ENCODE measurements at regions of chr7 and their contacts with region 1.

Region 1: DNA sequence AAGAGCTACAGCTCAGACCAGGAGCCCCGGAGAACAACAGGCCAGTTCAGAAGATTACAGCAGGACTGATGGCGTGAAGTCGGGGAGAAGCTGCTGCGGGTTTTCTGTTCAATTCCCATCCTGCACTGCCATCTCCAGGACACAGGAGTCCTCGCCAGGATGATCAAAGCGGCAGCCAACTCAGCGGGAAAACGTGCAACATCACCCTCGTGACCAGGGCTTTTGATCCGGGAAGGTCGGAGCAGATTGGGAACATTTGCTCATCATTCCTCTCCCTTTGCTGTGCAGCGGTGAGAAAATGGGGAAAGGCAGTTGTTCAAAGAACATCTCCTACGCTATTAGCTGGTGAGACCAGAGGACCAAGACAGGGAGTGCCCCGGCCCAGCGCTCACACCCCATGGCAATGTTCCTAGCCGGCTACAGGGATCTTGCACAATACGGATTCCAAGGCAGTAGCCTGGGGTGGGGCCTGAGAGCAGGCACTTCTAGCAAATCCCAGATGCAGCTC is 50.4 kb upstream of the FOXK1 start:
- DNase-seq: peak; percentile 95
- H3K4me3 Mint-ChIP-seq: peak overlapping the region; percentile 65
- H3K27ac Mint-ChIP-seq: peak overlapping the region; percentile 92
- H3K4me1 Mint-ChIP-seq: peaks cover 12% of the 10 kb centered on the region
- H3K27me3 Mint-ChIP-seq: no peaks in the 10 kb centered on the region
- CTCF ChIP-seq: peak; percentile 82

Region 2: GRCh38 chr7:3309140-3309539 is 1322.6 kb before region 1 on chr7:
- CTCF ChIA-PET with region 1: no interaction called
- POLR2A ChIA-PET with region 1: no interaction called
- intact Hi-C with region 1: loop called (anchors 2 kb)
- DNase-seq: peak; percentile 55
- H3K4me3 Mint-ChIP-seq: no peak overlapping the region
- H3K27ac Mint-ChIP-seq: no peak overlapping the region
- H3K4me1 Mint-ChIP-seq: no peaks in the 10 kb centered on the region
- H3K27me3 Mint-ChIP-seq: no peaks in the 10 kb centered on the region
- CTCF ChIP-seq: peak; percentile 20

Region 3: DNA sequence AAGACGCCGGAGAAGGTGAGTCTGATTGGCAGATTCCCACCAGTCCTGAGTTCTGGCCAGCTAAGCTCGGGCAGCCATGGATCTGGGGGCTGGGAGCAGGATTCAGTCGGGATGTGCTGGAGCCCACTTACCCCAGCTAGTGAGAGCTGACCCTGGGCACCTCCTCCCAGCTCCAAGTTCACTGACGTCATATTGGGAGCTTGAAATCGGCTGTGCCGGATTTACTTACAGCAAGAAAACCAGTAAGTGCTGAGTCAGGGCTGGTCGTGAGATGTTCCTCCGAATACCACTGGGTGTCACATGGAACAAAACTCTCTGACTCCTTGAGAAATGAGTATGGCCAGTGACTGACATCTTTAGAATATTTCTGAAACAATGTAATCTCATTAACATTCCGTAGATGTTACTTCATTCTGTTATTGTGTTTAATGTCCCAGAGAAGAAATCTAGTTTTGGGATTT is 709.5 kb before region 1 on chr7:
- CTCF ChIA-PET with region 1: interaction called, 3 read pairs
- POLR2A ChIA-PET with region 1: no interaction called
- intact Hi-C with region 1: loop called (anchors 1 kb)
- DNase-seq: peak; percentile 85
- H3K4me3 Mint-ChIP-seq: no peak overlapping the region
- H3K27ac Mint-ChIP-seq: no peak overlapping the region
- H3K4me1 Mint-ChIP-seq: peaks cover 8% of the 10 kb centered on the region
- H3K27me3 Mint-ChIP-seq: peaks cover 10% of the 10 kb centered on the region
- CTCF ChIP-seq: peak; percentile 57

Region 4: GRCh38 chr7:4610768-4611467 is 20.8 kb before region 1 on chr7:
- CTCF ChIA-PET with region 1: interaction called, 57 read pairs
- POLR2A ChIA-PET with region 1: interaction called, 8 read pairs
- intact Hi-C with region 1: loop called (anchors 1 kb)
- DNase-seq: peak; percentile 78
- H3K4me3 Mint-ChIP-seq: no peak overlapping the region
- H3K27ac Mint-ChIP-seq: no peak overlapping the region
- H3K4me1 Mint-ChIP-seq: peaks cover 6% of the 10 kb centered on the region
- H3K27me3 Mint-ChIP-seq: no peaks in the 10 kb centered on the region
- CTCF ChIP-seq: peak; percentile 81

Region 5: DNA sequence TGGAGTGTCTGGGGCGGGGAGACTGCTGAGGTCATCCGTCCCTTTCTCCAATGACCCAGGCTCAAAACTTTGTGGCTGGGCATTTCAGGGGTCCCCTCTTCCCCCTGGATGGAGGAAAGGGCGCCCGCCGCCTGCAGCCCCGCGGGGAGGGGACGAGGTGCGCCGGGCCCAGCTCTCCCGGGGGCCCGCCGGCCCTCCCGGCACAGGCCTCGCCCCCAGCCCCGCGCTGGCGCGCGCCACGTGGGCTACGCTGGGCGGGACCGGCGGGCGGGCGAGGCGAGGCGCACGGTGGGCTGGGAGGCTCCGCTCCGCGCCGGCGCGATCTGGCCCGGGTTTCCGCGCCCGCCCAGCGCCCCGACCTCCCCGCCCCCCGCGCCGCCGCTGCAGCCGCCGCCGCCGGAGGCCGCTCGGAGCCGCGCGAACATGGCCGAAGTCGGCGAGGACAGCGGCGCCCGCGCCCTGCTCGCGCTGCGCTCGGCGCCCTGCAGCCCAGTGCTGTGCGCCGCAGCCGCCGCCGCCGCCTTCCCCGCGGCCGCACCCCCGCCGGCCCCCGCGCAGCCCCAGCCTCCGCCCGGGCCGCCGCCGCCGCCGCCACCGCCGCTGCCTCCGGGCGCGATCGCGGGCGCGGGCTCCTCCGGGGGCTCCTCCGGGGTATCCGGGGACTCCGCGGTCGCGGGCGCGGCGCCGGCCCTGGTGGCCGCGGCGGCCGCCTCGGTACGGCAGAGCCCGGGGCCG is 50.3 kb after region 1 on chr7 and contains the start of gene FOXK1:
- CTCF ChIA-PET with region 1: interaction called, 5 read pairs
- POLR2A ChIA-PET with region 1: interaction called, 13 read pairs
- intact Hi-C with region 1: no loop called
- DNase-seq: peak; percentile 64
- H3K4me3 Mint-ChIP-seq: peak within 1 kb of the TSS; percentile 83
- H3K27ac Mint-ChIP-seq: peak within 1 kb of the TSS; percentile 96
- H3K4me1 Mint-ChIP-seq: peaks cover 19% of the 10 kb centered on the region
- H3K27me3 Mint-ChIP-seq: no peaks in the 10 kb centered on the region
- CTCF ChIP-seq: no peak
- total RNA-seq, gene FOXK1: 37.7 and 43.8 TPM in 2 replicates

Region 6: GRCh38 chr7:4753711-4754432 is 122.2 kb after region 1 on chr7:
- CTCF ChIA-PET with region 1: interaction called, 11 read pairs
- POLR2A ChIA-PET with region 1: no interaction called
- intact Hi-C with region 1: no loop called
- DNase-seq: peak; percentile 73
- H3K4me3 Mint-ChIP-seq: no peak overlapping the region
- H3K27ac Mint-ChIP-seq: no peak overlapping the region
- H3K4me1 Mint-ChIP-seq: no peaks in the 10 kb centered on the region
- H3K27me3 Mint-ChIP-seq: no peaks in the 10 kb centered on the region
- CTCF ChIP-seq: peak; percentile 95

Region 7: GRCh38 chr7:4951903-4952636 is 320.4 kb after region 1 on chr7:
- CTCF ChIA-PET with region 1: no interaction called
- POLR2A ChIA-PET with region 1: no interaction called
- intact Hi-C with region 1: no loop called
- DNase-seq: peak; percentile 21
- H3K4me3 Mint-ChIP-seq: no peak overlapping the region
- H3K27ac Mint-ChIP-seq: no peak overlapping the region
- H3K4me1 Mint-ChIP-seq: no peaks in the 10 kb centered on the region
- H3K27me3 Mint-ChIP-seq: peaks cover 11% of the 10 kb centered on the region
- CTCF ChIP-seq: no peak

Measured in MCF 10A (cell line).